Gastrocnemius medialis (tissue), 4 donors: ENCODE measurements at regions of chr3 and their contacts with region 1.

Region 1: DNA sequence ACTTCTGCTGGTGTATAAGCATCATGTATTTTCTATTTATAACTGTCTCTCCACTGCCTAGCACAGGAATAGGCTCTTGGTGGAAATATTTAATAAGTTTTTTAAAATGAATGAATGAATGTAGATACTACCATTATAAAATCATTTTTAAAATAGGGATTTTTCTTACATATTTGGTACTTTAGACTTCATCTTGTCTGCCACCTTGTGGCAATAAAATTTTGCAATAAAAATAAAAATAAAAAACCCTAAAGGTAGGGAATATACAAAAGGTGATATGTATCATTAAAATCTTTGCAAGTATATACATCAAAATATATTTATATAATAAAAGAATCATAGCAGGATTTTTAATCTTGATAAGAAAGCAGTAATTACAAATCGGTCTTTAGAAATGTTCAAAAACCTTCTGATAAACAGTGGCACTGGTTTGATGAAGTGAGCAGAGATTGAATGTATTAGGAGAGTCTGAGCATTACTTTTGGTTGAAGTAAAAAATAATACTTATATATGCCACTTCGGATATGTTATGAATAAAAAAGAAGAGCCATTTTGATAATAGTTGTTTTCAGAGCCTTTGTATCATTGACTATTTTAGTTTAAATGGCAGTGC is 95.2 kb downstream of the SPATA16 start:
- DNase-seq: no peak
- ATAC-seq: no peak
- H3K4me3 ChIP-seq: no peak overlapping the region
- H3K27ac ChIP-seq: no peak overlapping the region
- H3K4me1 ChIP-seq: no peaks in the 10 kb centered on the region
- H3K27me3 ChIP-seq: no peaks in the 10 kb centered on the region
- CTCF ChIP-seq: peak in 2 of 5 experiments; percentile 9 to 29
- POLR2A ChIP-seq: no peak

Region 2: DNA sequence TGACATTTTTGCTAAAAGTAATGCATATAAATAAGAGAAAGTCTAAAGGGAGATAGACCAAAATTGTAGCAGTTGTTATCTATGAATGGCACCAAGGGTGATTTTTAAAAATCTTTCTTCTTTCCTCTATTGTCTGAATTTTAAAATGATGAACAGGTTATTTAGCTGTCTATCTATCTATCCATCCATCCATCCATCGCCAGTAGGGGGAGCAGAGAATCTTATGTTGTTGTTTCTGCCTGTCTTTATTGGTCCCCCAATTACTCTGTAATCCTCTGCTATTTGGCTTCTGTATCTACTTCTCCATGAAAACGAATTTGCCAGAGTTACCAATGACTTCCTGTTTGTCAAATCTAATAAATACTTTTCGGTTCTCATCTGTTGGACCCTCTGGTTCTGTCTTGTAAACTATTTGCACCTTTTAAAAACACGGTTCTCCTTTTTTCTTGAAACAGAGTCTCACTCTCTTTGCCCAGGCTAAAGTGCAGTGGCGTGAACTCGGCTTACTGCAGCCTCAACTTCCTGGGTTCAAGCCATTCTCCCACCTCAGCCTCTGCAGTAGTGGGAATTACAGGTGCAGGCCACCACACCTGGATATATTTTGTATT is 209.4 kb before region 1 on chr3:
- in situ Hi-C with region 1: loop called in 1 of 4 experiments (anchors 25 kb)
- intact Hi-C with region 1: no loop called
- DNase-seq: no peak
- ATAC-seq: no peak
- H3K4me3 ChIP-seq: no peak overlapping the region
- H3K27ac ChIP-seq: no peak overlapping the region
- H3K4me1 ChIP-seq: no peaks in the 10 kb centered on the region
- H3K27me3 ChIP-seq: no peaks in the 10 kb centered on the region
- CTCF ChIP-seq: peak in 2 of 5 experiments; percentile 11 to 27
- POLR2A ChIP-seq: no peak